ENCODE measurements at regions of chr3 and their contacts with region 1.

Region 1: GRCh38 chr3:8416965-8417364 is 84.7 kb upstream of the LMCD1 start:
- DNase-seq: peak; percentile 23
- ATAC-seq: no peak
- H3K4me3 Mint-ChIP-seq: no peak overlapping the region
- H3K27ac Mint-ChIP-seq: no peak overlapping the region
- H3K4me1 Mint-ChIP-seq: peaks cover 5% of the 10 kb centered on the region
- H3K27me3 Mint-ChIP-seq: no peaks in the 10 kb centered on the region

Region 2: DNA sequence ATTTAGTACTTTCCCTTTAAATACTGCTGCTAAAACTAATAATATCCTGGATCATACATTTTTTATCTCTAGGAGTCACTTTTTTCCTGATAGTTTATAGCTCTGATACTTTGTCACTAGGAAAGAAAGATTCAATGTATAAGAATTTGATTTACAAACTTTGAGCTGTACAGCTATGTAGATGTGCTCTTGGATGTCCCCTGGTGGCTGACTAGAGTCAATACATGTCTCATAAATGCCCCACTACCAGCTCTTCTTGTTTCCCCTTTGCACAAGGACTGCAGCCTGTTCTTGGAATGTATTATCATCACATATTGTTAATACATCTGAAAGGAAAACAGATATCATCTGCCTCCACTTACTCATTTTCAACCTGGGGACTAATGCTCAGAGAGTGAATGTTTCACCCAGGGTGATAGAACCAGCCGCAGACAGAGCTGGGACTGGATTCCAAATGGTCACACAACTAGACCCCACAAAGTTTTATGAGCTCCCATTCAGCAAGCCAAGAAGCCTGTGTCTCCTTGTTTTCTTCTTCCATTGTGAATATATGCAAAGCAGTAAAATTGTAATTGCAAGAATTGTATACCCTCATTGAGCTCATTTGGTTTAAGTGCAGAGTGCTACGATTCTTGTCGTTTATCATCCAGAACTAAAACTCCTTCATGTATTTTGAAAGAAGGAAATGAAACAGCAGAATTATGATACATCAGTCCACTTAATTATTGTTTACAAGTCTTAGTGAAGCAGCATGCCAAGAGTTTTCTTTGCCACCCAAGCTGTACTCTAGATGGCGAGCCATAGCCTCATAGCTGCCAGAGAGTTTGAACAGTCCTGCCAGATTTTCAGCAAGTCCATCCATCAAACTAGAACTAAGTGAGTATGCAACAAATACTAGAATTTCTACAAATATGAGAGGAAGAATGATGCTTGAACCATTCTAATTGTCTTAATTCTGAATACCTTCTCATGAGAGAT is 177.0 kb before region 1 on chr3:
- CTCF ChIA-PET with region 1: interaction called, 10 read pairs
- POLR2A ChIA-PET with region 1: no interaction called
- intact Hi-C with region 1: loop called in 1 of 2 experiments (anchors 5 kb)
- DNase-seq: peak; percentile 56
- ATAC-seq: peak; percentile 61
- H3K4me3 Mint-ChIP-seq: no peak overlapping the region
- H3K27ac Mint-ChIP-seq: no peak overlapping the region
- H3K4me1 Mint-ChIP-seq: no peaks in the 10 kb centered on the region
- H3K27me3 Mint-ChIP-seq: no peaks in the 10 kb centered on the region

Region 3: GRCh38 chr3:8324740-8325139 is 92.2 kb before region 1 on chr3:
- CTCF ChIA-PET with region 1: interaction called, 65 read pairs
- POLR2A ChIA-PET with region 1: no interaction called
- intact Hi-C with region 1: loop called (anchors 1 kb)
- DNase-seq: peak; percentile 71
- ATAC-seq: peak; percentile 58
- H3K4me3 Mint-ChIP-seq: no peak overlapping the region
- H3K27ac Mint-ChIP-seq: no peak overlapping the region
- H3K4me1 Mint-ChIP-seq: peaks cover 14% of the 10 kb centered on the region
- H3K27me3 Mint-ChIP-seq: no peaks in the 10 kb centered on the region

Measured in activated CD4-positive, alpha-beta T cell treated with anti-CD3 and anti-CD28 coated beads for 36 hours (primary cell).